ENCODE measurements at regions of chr15 and their contacts with region 1.

Region 1: DNA sequence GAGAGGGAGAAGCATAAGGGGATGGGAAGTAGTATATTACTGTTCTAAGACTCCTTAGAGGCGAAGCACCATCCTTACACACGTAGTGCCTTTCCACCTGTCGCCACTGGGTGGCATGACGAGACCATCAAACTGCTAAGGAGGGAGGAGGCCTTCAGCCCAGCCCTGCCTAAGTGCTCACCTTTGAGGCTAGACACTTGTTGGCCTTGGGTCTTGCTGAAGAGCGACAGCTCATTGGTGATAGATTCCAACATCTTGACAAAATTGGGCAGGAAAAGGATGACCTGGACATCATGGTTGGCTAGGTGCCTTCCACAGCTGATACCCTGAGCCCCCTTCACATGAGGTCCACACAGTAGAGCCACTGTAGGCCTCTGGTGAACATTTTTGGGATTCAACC is 19.6 kb downstream of the CLK3 start:
- DNase-seq: peak; percentile 83
- ATAC-seq: peak; percentile 71
- H3K4me3 ChIP-seq: no peak overlapping the region
- H3K4me3 Mint-ChIP-seq: no peak overlapping the region
- H3K27ac ChIP-seq: no peak overlapping the region
- H3K27ac Mint-ChIP-seq: peak overlapping the region; percentile 33
- H3K4me1 ChIP-seq: peaks cover 8 to 20% of the 10 kb centered on the region in 2 donors
- H3K4me1 Mint-ChIP-seq: peaks cover 18% of the 10 kb centered on the region
- H3K27me3 ChIP-seq: no peaks in the 10 kb centered on the region
- H3K27me3 Mint-ChIP-seq: no peaks in the 10 kb centered on the region
- CTCF ChIP-seq: peak; percentile 88

Region 2: DNA sequence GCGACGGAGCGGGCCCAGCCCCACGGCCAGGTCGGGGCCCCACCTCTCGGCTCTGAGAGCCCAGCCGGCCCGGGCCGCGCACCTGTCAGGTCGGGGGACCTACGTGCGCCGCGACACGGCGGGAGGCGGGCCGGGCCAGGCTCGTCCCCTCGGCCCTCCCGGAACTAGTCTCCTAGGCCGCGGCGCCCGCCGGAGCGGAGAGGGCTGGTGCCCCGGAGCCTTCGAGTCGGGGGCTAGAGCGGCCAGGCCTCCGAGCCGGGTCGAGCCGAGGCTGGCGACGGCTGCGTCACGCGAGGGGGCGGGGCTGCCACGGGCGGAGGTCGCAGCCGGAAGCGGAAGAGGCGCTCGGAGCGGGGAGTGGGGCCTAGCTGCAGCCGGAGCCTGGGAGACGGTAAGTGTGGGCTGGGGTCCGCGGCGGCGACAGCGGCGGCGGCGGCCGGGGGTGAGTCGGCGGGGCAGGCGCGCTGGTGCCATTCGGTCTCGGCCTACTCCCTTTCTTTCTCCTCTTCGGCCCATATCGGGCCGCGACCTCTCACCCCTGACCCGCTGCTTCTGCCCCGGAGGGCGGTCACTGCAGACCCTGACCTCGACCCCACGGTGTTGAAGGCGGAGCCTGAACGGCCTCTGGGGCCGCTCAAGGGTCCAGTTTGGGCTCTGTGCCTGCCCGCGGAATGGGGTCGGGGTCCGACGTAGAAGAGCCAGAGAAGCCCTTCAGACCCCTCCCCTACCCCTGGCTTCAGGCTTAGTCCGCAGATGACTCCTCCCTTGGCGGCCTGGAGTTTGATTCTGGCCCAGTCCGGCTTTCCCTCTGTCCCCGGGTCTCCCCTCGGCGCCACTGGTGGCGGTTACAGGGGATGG is 19.5 kb before region 1 on chr15 and contains the start of gene CLK3:
- CTCF ChIA-PET with region 1: interaction called, 371 read pairs
- POLR2A ChIA-PET with region 1: interaction called, 3 read pairs
- intact Hi-C with region 1: no loop called
- DNase-seq: peak; percentile 96
- ATAC-seq: peak; percentile 80
- H3K4me3 ChIP-seq: peak within 1 kb of the TSS; percentile 50 to 100 (median 100)
- H3K4me3 Mint-ChIP-seq: peak within 1 kb of the TSS; percentile 92
- H3K27ac ChIP-seq: peak within 1 kb of the TSS; percentile 99
- H3K27ac Mint-ChIP-seq: peak within 1 kb of the TSS; percentile 97
- H3K4me1 ChIP-seq: peaks cover 18 to 39% of the 10 kb centered on the region in 2 donors
- H3K4me1 Mint-ChIP-seq: peaks cover 37% of the 10 kb centered on the region
- H3K27me3 ChIP-seq: no peaks in the 10 kb centered on the region
- H3K27me3 Mint-ChIP-seq: no peaks in the 10 kb centered on the region
- CTCF ChIP-seq: no peak
- total RNA-seq, gene CLK3: 164 and 176 TPM in 2 replicates

Region 3: DNA sequence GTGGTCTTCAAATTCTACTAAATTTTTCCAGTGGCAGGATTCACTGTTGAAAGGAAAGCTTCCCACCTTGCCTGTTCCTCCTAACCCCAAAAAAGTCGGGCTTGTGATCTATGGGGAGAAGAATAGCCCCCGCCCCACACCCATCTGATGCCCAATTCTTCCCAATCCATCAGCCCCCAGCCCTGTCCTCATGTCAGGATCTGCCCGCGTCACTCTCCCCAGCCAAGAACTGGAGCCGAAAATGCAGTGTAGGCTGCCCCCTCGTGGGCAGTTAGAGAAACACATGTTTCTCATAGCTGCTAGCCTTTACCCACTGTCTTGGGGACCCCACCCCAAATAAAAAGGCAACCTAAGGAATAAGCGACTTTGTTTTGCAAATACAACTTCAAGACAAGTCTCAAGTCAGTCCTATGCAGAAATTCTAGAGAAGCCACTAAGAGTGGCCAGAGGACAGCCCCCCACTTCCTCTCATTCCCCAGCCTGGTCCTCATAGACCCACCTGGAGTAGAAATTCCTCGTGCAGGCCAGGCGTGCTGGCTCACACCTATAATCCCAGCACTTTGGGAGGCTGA is 133.6 kb after region 1 on chr15:
- CTCF ChIA-PET with region 1: interaction called, 596 read pairs
- POLR2A ChIA-PET with region 1: interaction called, 3 read pairs
- intact Hi-C with region 1: loop called (anchors 1 kb)
- DNase-seq: peak; percentile 75
- ATAC-seq: peak; percentile 60
- H3K4me3 ChIP-seq: no peak overlapping the region
- H3K4me3 Mint-ChIP-seq: no peak overlapping the region
- H3K27ac ChIP-seq: no peak overlapping the region
- H3K27ac Mint-ChIP-seq: peak overlapping the region; percentile 18
- H3K4me1 ChIP-seq: peaks cover 34 to 41% of the 10 kb centered on the region in 2 donors
- H3K4me1 Mint-ChIP-seq: peaks cover 36% of the 10 kb centered on the region
- H3K27me3 ChIP-seq: no peaks in the 10 kb centered on the region
- H3K27me3 Mint-ChIP-seq: no peaks in the 10 kb centered on the region
- CTCF ChIP-seq: peak; percentile 84

Region 4: GRCh38 chr15:74835307-74835823 is 200.1 kb after region 1 on chr15:
- CTCF ChIA-PET with region 1: interaction called, 15 read pairs
- POLR2A ChIA-PET with region 1: no interaction called
- intact Hi-C with region 1: loop called (anchors 1 kb)
- DNase-seq: peak; percentile 55
- ATAC-seq: peak; percentile 62
- H3K4me3 ChIP-seq: no peak overlapping the region
- H3K4me3 Mint-ChIP-seq: no peak overlapping the region
- H3K27ac ChIP-seq: no peak overlapping the region
- H3K27ac Mint-ChIP-seq: no peak overlapping the region
- H3K4me1 ChIP-seq: peaks cover 0 to 13% of the 10 kb centered on the region in 2 donors
- H3K4me1 Mint-ChIP-seq: peaks cover 8% of the 10 kb centered on the region
- H3K27me3 ChIP-seq: peaks cover 0 to under 1% (median 0%) of the 10 kb centered on the region in 4 experiments
- H3K27me3 Mint-ChIP-seq: no peaks in the 10 kb centered on the region
- CTCF ChIP-seq: peak; percentile 77

Region 5: DNA sequence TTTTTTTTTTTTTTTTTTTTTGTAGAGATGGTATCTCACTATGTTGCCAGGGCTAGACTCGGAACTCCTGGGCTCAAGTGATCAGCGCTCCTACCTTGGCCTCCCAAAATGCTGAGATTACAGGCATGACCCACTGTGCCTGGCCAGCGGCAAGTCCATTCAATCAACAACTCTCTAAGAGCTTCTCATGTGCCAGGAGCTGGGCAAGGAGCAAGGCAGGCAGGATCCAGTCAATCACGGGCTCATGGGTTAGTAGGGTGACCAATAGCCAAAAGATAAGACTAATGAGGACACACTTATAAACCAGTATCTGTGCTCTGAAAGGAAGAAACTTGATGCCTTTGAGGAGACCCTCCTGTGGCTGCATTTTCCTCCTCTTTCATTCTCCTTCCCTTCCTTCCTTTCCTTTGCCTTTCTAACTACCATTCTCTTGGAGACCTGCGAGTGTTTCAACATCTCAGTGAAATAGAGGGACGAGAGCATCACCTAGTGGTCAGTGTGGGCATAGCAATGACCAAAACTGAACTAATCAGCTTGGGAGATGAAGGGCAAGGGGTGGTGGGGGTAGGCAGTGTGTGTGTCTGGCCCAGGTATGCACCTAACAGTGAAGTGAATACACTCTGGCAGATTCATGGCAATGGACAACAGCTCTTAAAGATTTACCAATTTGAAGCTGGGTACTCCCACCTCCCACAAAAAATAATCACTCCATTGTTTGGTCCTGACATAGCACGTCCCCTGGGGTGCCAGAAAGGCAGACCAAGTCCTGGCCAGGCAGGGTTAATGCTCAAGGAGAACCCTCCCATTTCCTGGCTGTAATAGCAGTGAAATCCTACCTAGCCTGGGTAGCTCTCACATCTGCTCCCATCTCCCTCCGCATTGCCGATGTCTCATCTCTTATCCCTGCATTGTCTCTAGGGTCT is 315.1 kb after region 1 on chr15:
- CTCF ChIA-PET with region 1: interaction called, 55 read pairs
- POLR2A ChIA-PET with region 1: no interaction called
- intact Hi-C with region 1: loop called (anchors 1 kb)
- DNase-seq: peak; percentile 86
- ATAC-seq: peak; percentile 95
- H3K4me3 ChIP-seq: no peak overlapping the region
- H3K4me3 Mint-ChIP-seq: no peak overlapping the region
- H3K27ac ChIP-seq: no peak overlapping the region
- H3K27ac Mint-ChIP-seq: no peak overlapping the region
- H3K4me1 ChIP-seq: peaks cover 6 to 8% of the 10 kb centered on the region in 2 donors
- H3K4me1 Mint-ChIP-seq: peaks cover 7% of the 10 kb centered on the region
- H3K27me3 ChIP-seq: peaks cover 0 to 22% (median 2%) of the 10 kb centered on the region in 4 experiments
- H3K27me3 Mint-ChIP-seq: peaks cover 7% of the 10 kb centered on the region
- CTCF ChIP-seq: peak; percentile 97

Measured in B cell (primary cell).